HEK293 (cell line): ENCODE measurements at regions of chr6 and their contacts with region 1.

Region 1: DNA sequence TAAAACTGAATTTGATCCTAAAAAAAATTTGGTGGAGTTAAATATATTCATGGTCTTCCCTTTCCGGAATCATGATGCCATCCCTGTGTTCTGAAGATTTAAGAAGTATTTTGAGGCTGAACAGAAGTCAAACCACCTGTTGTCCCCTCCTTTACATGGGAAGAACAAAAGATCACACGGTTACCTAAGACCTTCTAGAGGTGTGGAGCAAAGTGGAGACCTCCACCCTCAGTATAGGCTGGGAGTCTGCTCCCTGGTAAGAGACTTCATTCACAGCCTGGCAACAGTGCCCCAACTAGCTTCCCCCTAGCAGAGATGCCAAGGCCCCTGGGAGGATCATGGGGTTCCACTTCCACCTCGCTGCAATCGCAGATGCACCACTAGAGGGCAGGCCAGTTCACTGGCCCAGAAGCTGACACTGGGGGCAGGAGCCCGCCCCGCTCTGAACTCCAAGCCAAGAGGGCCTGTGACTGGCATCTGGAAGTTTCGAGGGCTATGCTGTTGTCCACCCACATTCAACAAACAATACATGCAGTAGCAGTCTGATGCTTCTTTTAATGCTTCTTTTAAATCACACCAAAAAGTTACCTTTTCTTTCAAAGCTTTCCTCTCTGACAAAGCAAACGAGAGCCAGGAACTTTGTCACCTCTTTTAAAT is 19.5 kb upstream of the UBE2J1 start:
- H3K4me3 ChIP-seq: no peak overlapping the region
- H3K27ac ChIP-seq: no peak overlapping the region
- H3K4me1 ChIP-seq: peaks cover 11% of the 10 kb centered on the region
- CTCF ChIP-seq: peak; percentile 76

Region 2: GRCh38 chr6:88636871-88637270 is 735.1 kb before region 1 on chr6:
- CTCF ChIA-PET with region 1: no interaction called
- POLR2A ChIA-PET with region 1: no interaction called
- H3K4me3 ChIP-seq: no peak overlapping the region
- H3K27ac ChIP-seq: no peak overlapping the region
- H3K4me1 ChIP-seq: no peaks in the 10 kb centered on the region
- CTCF ChIP-seq: no peak

Region 3: DNA sequence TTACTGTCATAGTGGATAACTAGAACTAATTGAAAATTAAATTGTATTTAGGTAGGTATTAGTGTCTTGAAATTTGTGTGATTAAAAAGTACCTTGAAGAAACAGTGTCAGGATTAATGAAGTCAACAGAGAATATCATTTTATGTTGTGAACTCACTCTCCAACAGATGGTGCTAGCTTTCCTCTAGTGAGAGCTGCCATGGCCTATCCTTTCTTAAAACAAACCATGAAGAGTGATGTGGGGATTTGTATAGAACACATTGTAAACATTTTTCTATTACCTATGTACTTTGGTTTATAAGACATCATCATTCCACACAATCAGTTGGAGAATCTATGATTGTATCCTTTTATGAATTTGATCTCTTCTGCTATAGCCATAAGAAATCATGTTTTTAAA is 249.4 kb before region 1 on chr6:
- CTCF ChIA-PET with region 1: interaction called, 10 read pairs
- POLR2A ChIA-PET with region 1: no interaction called
- H3K4me3 ChIP-seq: no peak overlapping the region
- H3K27ac ChIP-seq: no peak overlapping the region
- H3K4me1 ChIP-seq: no peaks in the 10 kb centered on the region
- CTCF ChIP-seq: peak; percentile 45; the same call in 1 of the 2 replicates

Region 4: DNA sequence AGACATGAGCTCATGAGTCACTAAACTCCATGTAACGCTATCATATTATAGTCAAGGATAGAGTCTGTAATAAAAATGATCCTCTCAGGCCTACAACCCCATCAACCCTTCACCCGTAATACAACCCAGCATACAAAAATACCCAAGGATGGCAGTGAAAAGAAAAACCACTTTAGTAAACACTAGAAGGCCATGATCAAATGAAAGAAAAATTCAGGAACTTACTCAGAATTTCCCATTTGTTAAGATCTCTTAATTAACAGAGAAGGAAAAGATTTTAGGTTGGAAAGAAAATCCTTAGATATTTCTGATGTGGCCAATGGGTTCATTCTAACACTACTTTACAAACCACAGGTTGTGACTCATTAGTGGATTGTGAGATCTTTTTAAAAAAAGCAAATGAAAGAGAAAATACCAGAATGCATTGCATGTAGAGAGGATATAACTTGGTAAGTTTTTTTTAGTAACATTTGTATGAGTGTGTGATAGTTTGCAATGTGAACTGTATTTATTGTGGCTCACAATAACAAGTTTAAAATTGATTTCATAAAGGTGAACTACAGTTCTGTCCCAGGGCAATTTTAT is 11.5 kb before region 1 on chr6:
- CTCF ChIA-PET with region 1: interaction called, 64 read pairs
- POLR2A ChIA-PET with region 1: interaction called, 5 read pairs
- H3K4me3 ChIP-seq: no peak overlapping the region
- H3K27ac ChIP-seq: no peak overlapping the region
- H3K4me1 ChIP-seq: no peaks in the 10 kb centered on the region
- CTCF ChIP-seq: no peak

Region 5: DNA sequence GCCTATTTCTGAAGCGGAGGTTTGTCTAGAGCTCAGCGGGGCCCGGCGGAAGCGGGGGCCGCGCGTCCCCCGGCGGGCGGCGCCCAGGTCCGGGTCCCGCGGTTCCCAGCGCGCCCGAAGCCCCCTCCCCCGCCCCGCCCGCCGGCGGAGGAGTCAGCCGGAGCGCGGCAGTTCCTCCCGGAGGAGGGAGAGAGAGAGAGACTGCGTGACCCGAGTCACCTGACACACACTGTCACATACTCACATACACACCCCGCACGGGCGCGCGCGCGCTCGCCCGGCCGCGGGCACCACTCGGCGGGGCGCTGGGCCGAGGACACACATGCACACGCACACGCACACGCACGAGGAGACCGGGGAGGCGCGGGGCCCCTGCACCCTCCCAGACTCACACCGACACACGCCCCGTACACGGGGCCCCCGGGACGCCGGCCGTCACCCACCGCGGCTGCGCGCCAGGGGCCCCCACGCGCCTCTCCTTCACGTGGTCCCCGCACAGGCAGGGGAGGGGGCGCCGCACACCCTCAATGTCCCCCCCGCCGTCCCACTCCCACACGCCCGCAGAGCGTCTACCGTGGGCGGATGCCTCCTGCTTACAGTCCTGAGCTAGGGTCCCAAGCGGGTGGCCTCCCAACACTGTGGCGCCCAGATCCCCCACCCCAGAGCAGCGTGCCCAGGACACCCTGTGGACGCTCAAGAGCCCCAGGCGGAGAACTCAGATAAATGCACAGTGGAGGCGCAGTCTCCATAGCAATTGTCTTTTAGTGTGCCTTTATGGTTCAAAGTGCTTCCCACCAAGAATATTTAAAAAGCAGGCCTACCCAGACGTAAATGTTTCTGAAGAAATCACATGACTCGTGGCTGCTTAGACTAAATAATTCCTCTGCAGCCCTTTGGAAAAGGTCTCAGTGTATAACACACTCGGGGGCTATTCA is 40.4 kb after region 1 on chr6 and contains the start of gene RRAGD:
- CTCF ChIA-PET with region 1: interaction called, 18 read pairs
- POLR2A ChIA-PET with region 1: no interaction called
- H3K4me3 ChIP-seq: peak within 1 kb of the TSS; percentile 85
- H3K27ac ChIP-seq: peak within 1 kb of the TSS; percentile 83
- H3K4me1 ChIP-seq: peaks cover 14% of the 10 kb centered on the region
- CTCF ChIP-seq: peak; percentile 88

Region 6: DNA sequence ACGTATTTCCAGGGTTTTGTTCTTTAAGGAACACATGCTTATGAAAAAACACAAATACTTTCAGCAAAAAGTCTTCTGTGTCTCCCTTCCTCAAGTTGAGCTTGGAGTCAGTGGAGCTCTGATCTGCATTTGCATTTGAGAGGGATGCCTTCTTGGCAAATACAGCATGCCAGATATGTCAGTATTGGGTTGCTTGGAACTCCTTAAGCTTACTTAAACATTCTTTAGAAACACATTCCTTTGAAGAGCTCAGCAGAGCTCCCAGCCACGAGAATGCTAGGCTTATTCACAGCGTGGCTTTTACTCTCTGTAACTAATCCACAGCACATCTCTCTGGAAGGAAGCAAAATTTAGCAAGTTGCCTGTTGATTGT is 129.3 kb after region 1 on chr6:
- CTCF ChIA-PET with region 1: no interaction called
- POLR2A ChIA-PET with region 1: no interaction called
- H3K4me3 ChIP-seq: no peak overlapping the region
- H3K27ac ChIP-seq: no peak overlapping the region
- H3K4me1 ChIP-seq: peaks cover 24% of the 10 kb centered on the region
- CTCF ChIP-seq: no peak

Region 7: GRCh38 chr6:89518317-89519050 is 146.5 kb after region 1 on chr6:
- CTCF ChIA-PET with region 1: no interaction called
- POLR2A ChIA-PET with region 1: no interaction called
- H3K4me3 ChIP-seq: no peak overlapping the region
- H3K27ac ChIP-seq: no peak overlapping the region
- H3K4me1 ChIP-seq: no peaks in the 10 kb centered on the region
- CTCF ChIP-seq: no peak

Region 8: GRCh38 chr6:89604653-89605052 is 232.7 kb after region 1 on chr6:
- CTCF ChIA-PET with region 1: interaction called, 14 read pairs
- POLR2A ChIA-PET with region 1: no interaction called
- H3K4me3 ChIP-seq: no peak overlapping the region
- H3K27ac ChIP-seq: no peak overlapping the region
- H3K4me1 ChIP-seq: no peaks in the 10 kb centered on the region
- CTCF ChIP-seq: no peak